Left ventricle myocardium superior (tissue), 1 donor: ENCODE measurements at regions of chr10 and their contacts with region 1.

Region 1: DNA sequence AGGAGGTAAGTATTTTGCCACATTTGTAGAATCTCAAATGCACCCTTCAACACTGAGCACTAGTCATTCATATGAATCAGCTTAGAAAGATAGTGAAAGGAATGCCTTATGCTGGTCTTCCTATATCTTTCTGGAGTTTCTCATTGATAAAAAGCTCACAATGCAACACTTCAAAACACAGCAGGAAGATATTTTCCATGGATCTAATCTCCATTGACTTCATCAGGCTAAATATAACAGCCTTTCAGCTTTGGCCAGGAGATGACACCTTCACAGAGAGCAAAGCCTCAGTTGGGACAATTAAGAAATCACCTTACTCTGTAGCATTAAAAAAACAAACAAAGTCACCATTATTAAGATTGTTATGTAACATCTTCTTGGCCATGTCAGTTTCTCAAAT is 6.7 kb downstream of the NRP1 start:
- DNase-seq: no peak
- ATAC-seq: peak; percentile 37

Region 2: DNA sequence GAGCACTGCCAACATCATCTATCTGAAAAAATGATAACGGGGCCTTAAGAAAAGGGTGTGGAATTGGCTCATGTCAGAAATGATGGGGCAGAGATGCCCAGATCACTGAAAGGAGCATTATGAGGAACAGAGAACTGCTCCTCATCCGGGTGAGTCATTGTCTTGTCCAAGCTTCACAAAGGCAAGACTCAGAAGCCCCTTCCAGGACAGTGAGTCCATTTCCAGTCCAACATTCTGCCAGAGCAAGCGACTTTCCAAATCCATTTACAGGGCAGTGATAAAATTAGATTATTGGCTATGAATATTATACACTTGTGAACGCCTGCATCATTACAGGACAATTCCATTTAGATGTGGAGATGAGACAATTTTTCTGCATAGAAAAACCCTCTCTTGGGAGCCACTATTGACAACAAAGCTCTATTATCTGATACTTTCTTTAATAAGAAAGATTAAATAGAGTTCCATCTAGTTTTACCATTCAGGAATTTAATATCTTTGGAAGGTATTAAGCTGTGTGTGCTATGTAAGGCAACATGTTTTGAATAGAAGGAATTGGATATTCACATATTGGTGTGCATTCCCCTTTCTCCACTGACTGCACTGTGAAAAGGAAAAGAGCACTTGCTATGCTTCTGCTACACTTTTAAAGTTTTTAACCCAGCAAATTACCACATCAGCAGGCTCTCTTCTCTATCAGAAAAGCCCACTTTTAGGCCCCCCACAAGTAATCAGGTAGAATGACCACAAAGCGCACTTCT is 152.9 kb before region 1 on chr10:
- intact Hi-C with region 1: no loop called
- DNase-seq: no peak
- ATAC-seq: no peak

Region 3: DNA sequence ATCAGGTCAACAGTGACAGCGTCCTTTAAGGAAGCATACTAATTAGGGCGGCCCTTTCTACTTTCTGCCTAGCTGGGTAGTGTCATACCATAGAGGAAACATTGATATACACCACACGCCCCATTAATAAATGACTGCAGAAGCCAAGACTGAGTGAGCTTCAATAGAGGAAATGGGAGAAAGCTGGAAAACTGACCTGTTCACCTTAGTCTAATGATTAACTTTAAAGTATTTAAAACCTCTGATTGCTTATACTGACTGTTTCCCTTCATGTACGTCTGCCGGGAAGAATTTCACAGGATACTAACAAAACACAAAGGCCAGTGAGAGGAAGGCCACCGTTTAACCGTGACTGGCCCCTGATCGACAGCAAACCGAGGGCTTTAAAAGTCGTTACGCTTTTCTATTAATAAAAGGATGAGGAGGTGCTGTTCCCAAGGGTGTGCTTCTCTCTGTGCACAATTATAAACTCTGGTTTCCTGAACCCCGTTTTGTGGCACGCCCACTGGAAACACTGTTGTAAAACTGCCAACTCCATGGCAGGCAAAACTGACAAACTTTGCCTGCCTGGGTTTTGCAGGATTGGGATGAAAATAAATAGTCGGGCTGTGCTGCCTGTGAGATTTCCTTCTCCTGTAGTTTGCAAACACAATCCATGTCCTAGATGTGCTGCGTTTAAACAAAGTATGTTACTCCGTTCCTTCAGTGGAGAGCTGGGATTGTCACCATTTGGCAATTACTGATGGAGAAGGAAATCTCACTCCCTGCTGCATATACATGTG is 130.8 kb before region 1 on chr10:
- intact Hi-C with region 1: loop called (anchors 5 kb)
- DNase-seq: peak; percentile 21
- ATAC-seq: peak; percentile 48

Region 4: GRCh38 chr10:33412653-33413361 is 85.1 kb after region 1 on chr10:
- intact Hi-C with region 1: no loop called
- DNase-seq: peak; percentile 38
- ATAC-seq: peak; percentile 80